ENCODE measurements at regions of chr22 and their contacts with region 1.

Region 1: DNA sequence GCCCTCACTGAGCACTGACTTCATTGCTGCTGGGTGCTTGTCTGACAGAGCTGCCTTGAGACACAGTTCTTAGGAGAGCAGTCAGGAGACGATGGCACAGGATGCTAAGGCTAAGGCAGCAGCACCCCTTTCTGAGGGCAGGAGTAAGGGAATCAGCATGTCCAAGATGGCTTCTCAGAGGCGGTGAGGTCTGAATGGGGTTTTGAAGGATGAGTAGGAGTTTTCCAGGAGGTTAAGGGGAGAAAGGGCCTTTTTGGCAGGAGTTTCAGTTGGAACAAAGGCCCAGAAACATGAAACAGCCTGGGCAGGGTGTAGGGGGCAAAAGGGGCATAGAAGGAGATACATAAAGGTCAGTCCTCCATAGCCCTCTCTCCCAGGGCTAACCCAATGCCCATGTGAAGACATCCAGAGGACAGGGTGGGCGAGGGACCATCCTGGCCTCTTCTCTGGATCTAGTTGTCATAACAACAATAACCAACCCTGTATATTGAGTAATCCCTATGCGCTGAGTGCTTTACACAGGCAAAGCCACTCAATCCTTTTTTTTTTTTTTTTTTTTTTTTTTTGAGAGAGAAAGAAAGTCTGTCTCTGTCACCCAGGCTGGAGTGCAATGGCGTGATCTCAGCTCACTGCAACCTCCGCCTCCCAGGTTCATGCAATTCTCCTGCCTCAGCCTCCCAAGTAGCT is 19.0 kb downstream of the CYTH4 start:
- DNase-seq: no peak
- ATAC-seq: no peak
- H3K4me3 ChIP-seq: no peak overlapping the region
- H3K27ac ChIP-seq: 0 out of 2 replicates have a peak overlapping the region, but pooled peaks have one; percentile 34
- H3K4me1 ChIP-seq: peaks cover 17% of the 10 kb centered on the region
- H3K27me3 ChIP-seq: no peaks in the 10 kb centered on the region
- CTCF ChIP-seq: no peak

Region 2: GRCh38 chr22:37229805-37230672 is 71.2 kb before region 1 on chr22:
- CTCF ChIA-PET with region 1: no interaction called
- POLR2A ChIA-PET with region 1: no interaction called
- in situ Hi-C with region 1: no loop called
- intact Hi-C with region 1: no loop called
- DNase-seq: no peak
- ATAC-seq: peak; percentile 66
- H3K4me3 ChIP-seq: no peak overlapping the region
- H3K27ac ChIP-seq: peak overlapping the region; percentile 59; the same call in 1 of the 2 replicates
- H3K4me1 ChIP-seq: peaks cover 21% of the 10 kb centered on the region
- H3K27me3 ChIP-seq: no peaks in the 10 kb centered on the region
- CTCF ChIP-seq: no peak

Region 3: DNA sequence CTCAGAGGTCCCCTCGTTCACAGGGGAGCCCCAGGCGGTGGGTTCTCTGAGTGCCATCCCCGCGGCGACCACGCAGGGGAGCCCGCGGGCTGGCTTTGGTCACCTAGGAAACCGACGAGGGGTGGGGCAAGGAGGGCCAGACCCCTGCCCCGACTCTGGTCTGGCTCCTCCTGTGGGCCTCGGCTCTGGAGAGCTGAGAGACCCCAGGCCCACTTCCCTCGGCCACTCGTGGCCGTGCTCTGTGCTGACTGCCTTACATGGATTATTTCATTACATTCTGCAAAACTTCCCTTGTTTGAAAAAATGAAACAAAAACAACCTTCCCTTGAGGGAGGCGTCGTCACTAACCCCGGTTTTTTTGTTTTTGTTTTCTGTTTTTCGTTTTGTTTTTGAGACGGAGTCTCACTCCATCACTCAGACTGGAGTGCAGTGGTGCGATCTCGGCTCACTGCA is 34.1 kb before region 1 on chr22:
- CTCF ChIA-PET with region 1: interaction called, 15 read pairs
- POLR2A ChIA-PET with region 1: no interaction called
- in situ Hi-C with region 1: no loop called
- intact Hi-C with region 1: no loop called
- DNase-seq: no peak
- ATAC-seq: peak; percentile 89
- H3K4me3 ChIP-seq: peak overlapping the region; percentile 46 to 62
- H3K27ac ChIP-seq: peak overlapping the region; percentile 66
- H3K4me1 ChIP-seq: no peaks in the 10 kb centered on the region
- H3K27me3 ChIP-seq: no peaks in the 10 kb centered on the region
- CTCF ChIP-seq: peak; percentile 91